CD8-positive, alpha-beta memory T cell (primary cell): ENCODE measurements at regions of chr19 and their contacts with region 1.

Region 1: GRCh38 chr19:44890366-44891015 is 563 bp upstream of the TOMM40 start:
- DNase-seq: peak in 2 of 5 donors; percentile 100
- H3K4me3 ChIP-seq: peak overlapping the region; percentile 81
- H3K4me3 Mint-ChIP-seq: peak overlapping the region; percentile 83 to 93 (median 86)
- H3K27ac ChIP-seq: peak overlapping the region; percentile 95
- H3K27ac Mint-ChIP-seq: peak overlapping the region; percentile 68 to 96 (median 93)
- H3K4me1 ChIP-seq: peaks cover 22% of the 10 kb centered on the region
- H3K4me1 Mint-ChIP-seq: peaks cover 23 to 32% (median 31%) of the 10 kb centered on the region in 3 donors
- H3K27me3 ChIP-seq: no peaks in the 10 kb centered on the region
- H3K27me3 Mint-ChIP-seq: no peaks in the 10 kb centered on the region

Region 2: DNA sequence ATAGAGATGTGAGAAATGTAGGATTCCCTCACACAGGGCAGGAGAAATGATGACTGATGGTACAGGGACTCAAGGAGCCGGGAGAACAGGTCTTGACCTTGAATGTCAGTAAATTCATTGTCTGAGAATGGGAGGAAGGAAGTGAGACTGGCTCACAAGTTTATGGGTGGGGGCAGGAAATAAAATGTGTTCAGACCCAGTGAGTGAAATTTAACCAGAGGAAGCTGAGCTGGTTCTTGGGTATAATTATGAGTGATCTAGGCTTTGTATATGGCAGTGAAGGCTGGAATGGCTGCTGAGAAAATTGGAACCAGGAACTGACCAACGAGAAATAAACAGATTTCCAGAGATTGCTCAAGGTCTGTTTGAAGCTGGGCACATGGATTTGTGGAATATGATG is 283.4 kb before region 1 on chr19:
- CTCF ChIA-PET with region 1: no interaction called
- POLR2A ChIA-PET with region 1: no interaction called
- DNase-seq: peak in 1 of 5 donors; percentile 2
- H3K4me3 ChIP-seq: no peak overlapping the region
- H3K4me3 Mint-ChIP-seq: no peak overlapping the region
- H3K27ac ChIP-seq: no peak overlapping the region
- H3K27ac Mint-ChIP-seq: no peak overlapping the region
- H3K4me1 ChIP-seq: peaks cover 10% of the 10 kb centered on the region
- H3K4me1 Mint-ChIP-seq: peaks cover 4 to 6% (median 5%) of the 10 kb centered on the region in 3 donors
- H3K27me3 ChIP-seq: no peaks in the 10 kb centered on the region
- H3K27me3 Mint-ChIP-seq: peaks cover 4 to 11% of the 10 kb centered on the region in 2 donors

Region 3: GRCh38 chr19:44857837-44858236 is 32.7 kb before region 1 on chr19:
- CTCF ChIA-PET with region 1: no interaction called
- POLR2A ChIA-PET with region 1: no interaction called
- DNase-seq: no peak
- H3K4me3 ChIP-seq: no peak overlapping the region
- H3K4me3 Mint-ChIP-seq: no peak overlapping the region
- H3K27ac ChIP-seq: no peak overlapping the region
- H3K27ac Mint-ChIP-seq: no peak overlapping the region
- H3K4me1 ChIP-seq: no peaks in the 10 kb centered on the region
- H3K4me1 Mint-ChIP-seq: no peaks in the 10 kb centered on the region
- H3K27me3 ChIP-seq: no peaks in the 10 kb centered on the region
- H3K27me3 Mint-ChIP-seq: peaks cover 4 to 23% of the 10 kb centered on the region in 2 donors

Region 4: DNA sequence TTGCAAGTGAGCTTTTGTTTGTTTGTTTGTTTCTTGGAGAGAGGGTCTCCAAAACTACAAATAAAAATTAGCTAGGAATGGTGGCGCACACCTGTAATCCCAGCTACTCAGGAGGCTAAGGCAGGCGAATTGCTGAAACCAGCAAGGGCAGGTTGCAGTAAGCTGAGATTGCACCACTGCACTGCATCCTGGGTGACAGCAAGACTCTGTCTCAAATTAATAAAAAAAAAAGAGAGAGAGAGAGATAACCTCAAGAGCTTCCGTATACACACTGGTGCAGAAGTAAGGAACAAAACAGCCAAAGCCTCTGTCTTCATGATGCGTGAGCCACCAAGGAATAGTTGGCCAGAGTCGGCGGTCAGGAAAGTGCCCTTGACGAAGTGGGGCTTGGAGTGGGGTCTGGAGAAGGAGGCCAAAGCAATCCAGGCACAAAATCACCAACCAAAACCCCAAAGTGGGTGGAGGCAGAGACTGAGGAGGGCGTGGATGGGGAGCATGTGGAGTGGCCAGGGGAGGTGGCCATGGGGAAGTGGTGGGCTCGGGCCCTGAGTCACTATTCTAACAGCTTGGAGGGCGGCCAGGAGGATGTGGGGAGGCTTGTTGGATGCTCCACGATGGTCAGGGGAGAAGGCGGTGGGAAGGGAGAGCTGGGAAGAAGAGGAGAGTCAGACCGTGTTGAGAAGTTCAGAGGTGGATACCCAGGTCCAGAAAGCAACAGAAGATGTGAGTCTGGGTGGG is 20.6 kb before region 1 on chr19:
- CTCF ChIA-PET with region 1: no interaction called
- POLR2A ChIA-PET with region 1: no interaction called
- DNase-seq: peak in 1 of 5 donors; percentile 13
- H3K4me3 ChIP-seq: no peak overlapping the region
- H3K4me3 Mint-ChIP-seq: no peak overlapping the region
- H3K27ac ChIP-seq: no peak overlapping the region
- H3K27ac Mint-ChIP-seq: no peak overlapping the region
- H3K4me1 ChIP-seq: no peaks in the 10 kb centered on the region
- H3K4me1 Mint-ChIP-seq: no peaks in the 10 kb centered on the region
- H3K27me3 ChIP-seq: no peaks in the 10 kb centered on the region
- H3K27me3 Mint-ChIP-seq: peaks cover 1 to 3% of the 10 kb centered on the region in 2 donors

Region 5: DNA sequence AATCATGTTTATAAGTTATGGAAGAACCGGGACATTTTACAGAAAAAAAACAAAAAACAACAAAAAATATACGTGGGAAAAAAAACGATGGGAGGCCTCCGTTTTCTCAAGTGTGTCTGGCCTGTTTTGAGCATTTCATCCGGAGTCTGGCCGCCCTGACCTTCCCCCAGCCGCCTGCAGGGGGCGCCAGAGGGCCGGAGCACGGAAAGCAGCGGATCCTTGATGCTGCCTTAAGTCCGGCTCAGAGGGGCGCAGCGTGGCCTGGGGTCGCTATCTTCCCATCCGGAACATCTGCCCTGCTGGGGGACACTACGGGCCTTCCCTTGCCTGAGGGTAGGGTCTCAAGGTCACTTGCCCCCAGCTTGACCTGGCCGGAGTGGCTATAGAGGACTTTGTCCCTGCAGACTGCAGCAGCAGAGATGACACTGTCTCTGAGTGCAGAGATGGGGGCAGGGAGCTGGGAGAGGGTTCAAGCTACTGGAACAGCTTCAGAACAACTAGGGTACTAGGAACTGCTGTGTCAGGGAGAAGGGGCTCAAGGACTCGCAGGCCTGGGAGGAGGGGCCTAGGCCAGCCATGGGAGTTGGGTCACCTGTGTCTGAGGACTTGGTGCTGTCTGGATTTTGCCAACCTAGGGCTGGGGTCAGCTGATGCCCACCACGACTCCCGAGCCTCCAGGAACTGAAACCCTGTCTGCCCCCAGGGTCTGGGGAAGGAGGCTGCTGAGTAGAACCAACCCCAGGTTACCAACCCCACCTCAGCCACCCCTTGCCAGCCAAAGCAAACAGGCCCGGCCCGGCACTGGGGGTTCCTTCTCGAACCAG is 13.3 kb after region 1 on chr19:
- CTCF ChIA-PET with region 1: interaction called, 13 read pairs
- POLR2A ChIA-PET with region 1: no interaction called
- DNase-seq: peak; percentile 54 to 75 (median 65)
- H3K4me3 ChIP-seq: no peak overlapping the region
- H3K4me3 Mint-ChIP-seq: no peak overlapping the region
- H3K27ac ChIP-seq: no peak overlapping the region
- H3K27ac Mint-ChIP-seq: peak overlapping the region in 1 of 8 donors; percentile 50
- H3K4me1 ChIP-seq: peaks cover 6% of the 10 kb centered on the region
- H3K4me1 Mint-ChIP-seq: peaks cover 3 to 15% (median 7%) of the 10 kb centered on the region in 3 donors
- H3K27me3 ChIP-seq: peaks cover 10% of the 10 kb centered on the region
- H3K27me3 Mint-ChIP-seq: peaks cover 20 to 22% of the 10 kb centered on the region in 2 donors

Region 6: GRCh38 chr19:44968118-44968517 is 77.6 kb after region 1 on chr19:
- CTCF ChIA-PET with region 1: no interaction called
- POLR2A ChIA-PET with region 1: no interaction called
- DNase-seq: no peak
- H3K4me3 ChIP-seq: no peak overlapping the region
- H3K4me3 Mint-ChIP-seq: no peak overlapping the region
- H3K27ac ChIP-seq: no peak overlapping the region
- H3K27ac Mint-ChIP-seq: peak overlapping the region in 2 of 8 donors; percentile 2 to 51
- H3K4me1 ChIP-seq: no peaks in the 10 kb centered on the region
- H3K4me1 Mint-ChIP-seq: peaks cover 4 to 9% (median 4%) of the 10 kb centered on the region in 3 donors
- H3K27me3 ChIP-seq: no peaks in the 10 kb centered on the region
- H3K27me3 Mint-ChIP-seq: peaks cover 0 to 2% of the 10 kb centered on the region in 2 donors

Region 7: GRCh38 chr19:45730389-45731288 is 840.1 kb after region 1 on chr19 and contains the start of gene FBXO46:
- CTCF ChIA-PET with region 1: no interaction called
- POLR2A ChIA-PET with region 1: interaction called, 15 read pairs
- DNase-seq: peak; percentile 85 to 94 (median 90)
- H3K4me3 ChIP-seq: peak within 1 kb of the TSS; percentile 88
- H3K4me3 Mint-ChIP-seq: peak within 1 kb of the TSS; percentile 82 to 99 (median 94)
- H3K27ac ChIP-seq: peak within 1 kb of the TSS; percentile 81
- H3K27ac Mint-ChIP-seq: peak within 1 kb of the TSS; percentile 16 to 99 (median 90)
- H3K4me1 ChIP-seq: peaks cover 27% of the 10 kb centered on the region
- H3K4me1 Mint-ChIP-seq: peaks cover 23 to 38% (median 37%) of the 10 kb centered on the region in 3 donors
- H3K27me3 ChIP-seq: no peaks in the 10 kb centered on the region
- H3K27me3 Mint-ChIP-seq: peaks cover 0 to 1% of the 10 kb centered on the region in 2 donors
- total RNA-seq, gene FBXO46: 25.2 to 30.4 TPM